ENCODE measurements at regions of chr1 and their contacts with region 1.

Region 1: DNA sequence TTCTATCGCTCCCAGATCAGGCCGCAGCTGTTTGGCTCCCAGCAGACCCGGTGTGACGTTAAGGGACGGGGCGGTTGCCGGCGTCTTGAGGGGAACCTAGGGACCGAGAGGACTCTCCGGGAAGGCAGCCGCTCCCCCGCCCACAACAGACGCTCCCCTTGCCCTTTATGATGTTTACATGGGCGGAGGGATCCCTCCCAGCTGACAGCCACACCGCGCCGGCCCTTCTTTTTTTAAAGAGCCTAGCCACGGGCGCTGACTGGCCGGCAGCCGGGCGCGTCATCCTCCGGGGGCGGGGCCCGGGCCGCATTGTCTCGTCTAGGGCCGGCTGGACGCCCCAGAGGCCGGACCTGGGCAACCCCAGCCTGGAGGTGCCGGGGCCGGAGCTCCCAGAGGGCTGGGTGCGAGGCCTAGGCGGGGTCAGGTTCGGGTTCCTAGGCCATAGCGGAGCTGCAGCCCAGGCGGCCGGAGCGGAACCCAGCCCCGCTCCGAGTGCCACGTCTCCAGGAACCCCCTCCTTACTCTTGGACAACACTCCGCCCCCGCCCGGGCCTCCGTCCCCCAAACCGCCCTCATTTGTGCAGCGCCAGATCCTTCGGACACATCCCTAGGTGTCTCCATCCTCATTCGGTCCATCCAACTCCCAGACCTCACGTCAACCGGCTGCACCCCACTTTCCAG is at the start of gene PCAT6:
- DNase-seq: peak; percentile 91
- H3K4me3 ChIP-seq: peak within 1 kb of the TSS; percentile 43 to 60 (median 58)
- H3K27ac ChIP-seq: peak within 1 kb of the TSS; percentile 62
- H3K4me1 ChIP-seq: peaks cover 39% of the 10 kb centered on the region
- H3K27me3 ChIP-seq: no peaks in the 10 kb centered on the region
- CTCF ChIP-seq: no peak
- total RNA-seq, gene PCAT6: 0.17 to 5.6 TPM

Region 2: GRCh38 chr1:202710070-202711045 is 100.4 kb before region 1 on chr1 and contains the start of gene SYT2:
- CTCF ChIA-PET with region 1: no interaction called
- dilution Hi-C with region 1: no loop called
- in situ Hi-C with region 1: loop called in 1 of 2 experiments (anchors 25 kb)
- intact Hi-C with region 1: no loop called
- DNase-seq: no peak
- H3K4me3 ChIP-seq: no peak within 1 kb of the TSS
- H3K27ac ChIP-seq: no peak within 1 kb of the TSS
- H3K4me1 ChIP-seq: peaks cover 5% of the 10 kb centered on the region
- H3K27me3 ChIP-seq: peaks cover 29% of the 10 kb centered on the region
- CTCF ChIP-seq: no peak
- total RNA-seq, gene SYT2: 0.07 TPM in 1 of 2 donors, not detected in the other

Region 3: GRCh38 chr1:202852163-202852904 is 41.6 kb after region 1 on chr1:
- CTCF ChIA-PET with region 1: no interaction called
- dilution Hi-C with region 1: no loop called
- in situ Hi-C with region 1: no loop called
- intact Hi-C with region 1: loop called (anchors 1 kb)
- DNase-seq: peak; percentile 36
- H3K4me3 ChIP-seq: no peak overlapping the region
- H3K27ac ChIP-seq: no peak overlapping the region
- H3K4me1 ChIP-seq: no peaks in the 10 kb centered on the region
- H3K27me3 ChIP-seq: no peaks in the 10 kb centered on the region
- CTCF ChIP-seq: peak; percentile 59 to 77

Region 4: GRCh38 chr1:202888531-202889360 is 78.0 kb after region 1 on chr1 and contains the start of gene RABIF:
- CTCF ChIA-PET with region 1: no interaction called
- dilution Hi-C with region 1: no loop called
- in situ Hi-C with region 1: no loop called
- intact Hi-C with region 1: loop called (anchors 2 kb)
- DNase-seq: peak; percentile 92
- H3K4me3 ChIP-seq: peak within 1 kb of the TSS; percentile 87 to 93 (median 88)
- H3K27ac ChIP-seq: peak within 1 kb of the TSS; percentile 64
- H3K4me1 ChIP-seq: peaks cover 12% of the 10 kb centered on the region
- H3K27me3 ChIP-seq: no peaks in the 10 kb centered on the region
- CTCF ChIP-seq: peak in 1 of 2 donors; percentile 37
- total RNA-seq, gene RABIF: 5.2 to 8.5 TPM

Region 5: GRCh38 chr1:203769505-203770343 is 959.0 kb after region 1 on chr1:
- CTCF ChIA-PET with region 1: no interaction called
- dilution Hi-C with region 1: no loop called
- in situ Hi-C with region 1: no loop called
- intact Hi-C with region 1: loop called (anchors 10 kb)
- DNase-seq: peak; percentile 94
- H3K4me3 ChIP-seq: no peak overlapping the region
- H3K27ac ChIP-seq: peak overlapping the region; percentile 79
- H3K4me1 ChIP-seq: peaks cover 16% of the 10 kb centered on the region
- H3K27me3 ChIP-seq: no peaks in the 10 kb centered on the region
- CTCF ChIP-seq: no peak

Measured in mammary epithelial cell (primary cell).